Prostate gland (tissue), 2 donors: ENCODE measurements at regions of chr17 and their contacts with region 1.

Region 1: GRCh38 chr17:2386400-2387085 is 14.3 kb downstream of the MNT start:
- DNase-seq: no peak
- H3K4me3 ChIP-seq: no peak overlapping the region
- H3K27ac ChIP-seq: peak overlapping the region in 1 of 2 donors; percentile 13
- H3K4me1 ChIP-seq: peaks cover 17% of the 10 kb centered on the region
- H3K27me3 ChIP-seq: no peaks in the 10 kb centered on the region
- CTCF ChIP-seq: no peak
- POLR2A ChIP-seq: no peak

Region 2: DNA sequence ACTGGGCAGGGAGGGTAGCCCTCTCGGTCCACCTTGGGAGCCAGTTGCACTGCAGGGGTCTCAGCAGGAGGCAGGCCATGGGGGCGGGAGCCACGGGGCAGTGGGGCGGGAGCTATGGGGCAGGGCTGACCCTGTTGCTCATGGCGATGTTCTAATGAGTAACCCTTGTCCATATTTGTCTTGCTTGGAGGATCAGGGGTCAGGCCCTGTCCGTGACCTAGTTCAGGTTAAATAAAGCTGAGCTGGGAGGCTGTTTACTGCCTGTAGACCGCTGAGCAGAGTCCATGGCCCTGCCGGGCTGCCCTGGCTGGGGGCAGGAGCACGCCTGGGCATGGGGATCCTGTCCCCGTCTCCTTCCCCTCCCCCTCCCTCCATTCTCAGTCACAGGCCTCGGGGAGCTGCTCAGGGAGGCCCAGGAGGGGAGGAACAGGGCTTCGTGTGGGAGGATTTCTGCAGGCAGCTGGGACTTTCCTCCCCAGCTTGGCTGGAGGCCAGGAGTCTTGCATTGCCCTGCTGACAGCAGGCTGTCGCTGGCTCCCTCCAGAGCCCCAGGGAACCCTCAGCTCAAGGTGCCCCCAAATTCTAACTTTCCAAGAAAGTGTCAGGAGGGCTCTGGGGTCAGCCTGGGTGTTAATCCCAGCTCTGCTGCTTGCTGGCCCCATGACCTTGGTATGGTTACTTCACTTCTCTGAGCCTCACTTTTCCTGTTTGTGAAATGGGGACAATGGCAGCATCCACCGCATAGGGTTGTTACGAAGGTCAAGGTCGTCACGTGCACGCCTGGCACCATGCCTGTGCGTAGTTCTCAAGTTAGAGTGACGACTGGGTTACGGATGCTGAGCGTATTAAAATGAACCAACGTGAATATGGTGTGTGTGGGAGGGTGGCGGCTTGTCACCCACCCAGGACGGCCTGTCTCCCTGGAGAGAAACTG is 649.9 kb before region 1 on chr17:
- intact Hi-C with region 1: no loop called
- DNase-seq: no peak
- H3K4me3 ChIP-seq: no peak overlapping the region
- H3K27ac ChIP-seq: no peak overlapping the region
- H3K4me1 ChIP-seq: no peaks in the 10 kb centered on the region
- H3K27me3 ChIP-seq: no peaks in the 10 kb centered on the region
- CTCF ChIP-seq: no peak
- POLR2A ChIP-seq: no peak

Region 3: GRCh38 chr17:2303204-2304188 is 83.0 kb before region 1 on chr17 and contains the starts of genes SMG6 and SRR:
- intact Hi-C with region 1: no loop called
- DNase-seq: peak; percentile 90
- H3K4me3 ChIP-seq: peak within 1 kb of the TSS; percentile 95 to 96
- H3K27ac ChIP-seq: peak within 1 kb of the TSS; percentile 95 to 96
- H3K4me1 ChIP-seq: peaks cover 5% of the 10 kb centered on the region
- H3K27me3 ChIP-seq: no peaks in the 10 kb centered on the region
- CTCF ChIP-seq: peak in 1 of 4 experiments; percentile 3
- POLR2A ChIP-seq: peak; percentile 65
- total RNA-seq, gene SMG6: 23.8 to 56.0 TPM
- total RNA-seq, gene SRR: 10.8 to 27.5 TPM

Region 4: DNA sequence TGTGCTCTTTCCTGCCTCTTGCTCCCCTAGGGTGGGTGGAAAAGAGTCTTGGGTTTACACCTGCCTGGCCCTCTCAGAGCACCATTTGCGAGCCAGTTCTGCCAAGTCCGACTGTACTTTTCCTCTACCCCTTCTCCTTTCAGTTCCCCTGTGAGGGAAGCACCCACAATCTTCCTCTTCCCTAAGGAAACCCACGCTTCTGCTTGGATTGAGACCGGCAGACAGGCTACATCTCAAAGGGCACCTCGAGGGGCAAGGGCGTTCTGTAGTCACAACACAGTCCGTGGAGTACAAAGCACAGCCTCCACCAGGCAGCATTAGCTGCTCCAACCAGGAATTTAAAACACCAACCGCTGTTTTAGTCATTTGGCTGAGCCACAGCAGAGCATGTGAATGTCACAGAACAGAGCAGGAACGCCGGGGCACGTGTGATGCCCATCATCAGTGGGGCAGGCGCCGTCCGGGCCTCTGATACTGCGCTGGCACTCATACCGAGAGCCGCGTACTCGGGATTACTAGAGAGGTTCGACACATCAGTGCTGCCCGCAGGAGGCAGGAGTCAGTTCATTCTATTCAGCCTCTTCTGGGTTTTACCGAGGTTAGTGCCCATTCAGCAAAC is 28.0 kb after region 1 on chr17:
- intact Hi-C with region 1: loop called (anchors 1 kb)
- DNase-seq: no peak
- H3K4me3 ChIP-seq: no peak overlapping the region
- H3K27ac ChIP-seq: no peak overlapping the region
- H3K4me1 ChIP-seq: no peaks in the 10 kb centered on the region
- H3K27me3 ChIP-seq: no peaks in the 10 kb centered on the region
- CTCF ChIP-seq: no peak
- POLR2A ChIP-seq: no peak